ENCODE measurements at regions of chr1 and their contacts with region 1.

Region 1: GRCh38 chr1:205658943-205659581 is 21.2 kb downstream of the SLC45A3 start:
- DNase-seq: peak; percentile 48 to 78 (median 59)
- H3K4me3 ChIP-seq: no peak overlapping the region
- H3K4me3 Mint-ChIP-seq: peak overlapping the region in 1 of 7 donors; percentile 8
- H3K27ac ChIP-seq: no peak overlapping the region
- H3K27ac Mint-ChIP-seq: no peak overlapping the region
- H3K4me1 ChIP-seq: no peaks in the 10 kb centered on the region
- H3K4me1 Mint-ChIP-seq: no peaks in the 10 kb centered on the region
- H3K27me3 ChIP-seq: no peaks in the 10 kb centered on the region
- H3K27me3 Mint-ChIP-seq: peaks cover 17 to 27% of the 10 kb centered on the region in 2 donors

Region 2: DNA sequence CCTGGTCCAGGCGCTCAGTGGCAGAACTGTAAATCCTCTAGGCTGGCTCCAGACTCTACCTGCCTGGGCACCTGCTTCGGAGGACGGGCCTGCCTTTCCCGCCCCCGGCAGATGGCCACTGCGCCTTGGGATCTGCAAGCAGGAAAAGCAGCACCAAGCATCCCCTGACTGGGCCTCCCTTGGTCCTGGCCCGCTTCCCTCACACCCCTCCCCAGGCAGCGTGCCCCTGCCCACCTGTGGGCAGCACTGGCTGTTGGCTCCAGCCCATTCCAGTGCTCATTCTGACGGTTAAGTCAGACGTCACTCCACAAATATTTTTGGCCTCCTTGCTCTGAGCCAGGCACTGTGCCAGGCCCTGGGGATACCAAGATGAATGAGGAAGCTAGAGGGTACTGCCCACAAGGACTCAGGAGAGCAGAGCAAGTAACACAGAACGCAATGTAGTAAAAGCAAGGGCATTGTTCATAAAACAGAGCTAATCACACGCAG is 181.3 kb before region 1 on chr1:
- CTCF ChIA-PET with region 1: no interaction called
- POLR2A ChIA-PET with region 1: no interaction called
- DNase-seq: no peak
- H3K4me3 ChIP-seq: no peak overlapping the region
- H3K4me3 Mint-ChIP-seq: peak overlapping the region in 2 of 7 donors; percentile 12 to 65
- H3K27ac ChIP-seq: no peak overlapping the region
- H3K27ac Mint-ChIP-seq: peak overlapping the region in 4 of 8 donors; percentile 12 to 75 (median 40)
- H3K4me1 ChIP-seq: peaks cover 30% of the 10 kb centered on the region
- H3K4me1 Mint-ChIP-seq: peaks cover 39 to 60% (median 46%) of the 10 kb centered on the region in 3 donors
- H3K27me3 ChIP-seq: peaks cover 8% of the 10 kb centered on the region
- H3K27me3 Mint-ChIP-seq: peaks cover 1 to 15% of the 10 kb centered on the region in 2 donors

Region 3: GRCh38 chr1:205528887-205529825 is 129.9 kb before region 1 on chr1:
- CTCF ChIA-PET with region 1: interaction called, 66 read pairs
- POLR2A ChIA-PET with region 1: no interaction called
- DNase-seq: peak; percentile 64 to 82 (median 75)
- H3K4me3 ChIP-seq: no peak overlapping the region
- H3K4me3 Mint-ChIP-seq: peak overlapping the region in 6 of 7 donors; percentile 34 to 78 (median 44)
- H3K27ac ChIP-seq: no peak overlapping the region
- H3K27ac Mint-ChIP-seq: peak overlapping the region in 1 of 8 donors; percentile 19
- H3K4me1 ChIP-seq: no peaks in the 10 kb centered on the region
- H3K4me1 Mint-ChIP-seq: peaks cover 0 to 7% (median 4%) of the 10 kb centered on the region in 3 donors
- H3K27me3 ChIP-seq: no peaks in the 10 kb centered on the region
- H3K27me3 Mint-ChIP-seq: peaks cover 4 to 8% of the 10 kb centered on the region in 2 donors

Region 4: DNA sequence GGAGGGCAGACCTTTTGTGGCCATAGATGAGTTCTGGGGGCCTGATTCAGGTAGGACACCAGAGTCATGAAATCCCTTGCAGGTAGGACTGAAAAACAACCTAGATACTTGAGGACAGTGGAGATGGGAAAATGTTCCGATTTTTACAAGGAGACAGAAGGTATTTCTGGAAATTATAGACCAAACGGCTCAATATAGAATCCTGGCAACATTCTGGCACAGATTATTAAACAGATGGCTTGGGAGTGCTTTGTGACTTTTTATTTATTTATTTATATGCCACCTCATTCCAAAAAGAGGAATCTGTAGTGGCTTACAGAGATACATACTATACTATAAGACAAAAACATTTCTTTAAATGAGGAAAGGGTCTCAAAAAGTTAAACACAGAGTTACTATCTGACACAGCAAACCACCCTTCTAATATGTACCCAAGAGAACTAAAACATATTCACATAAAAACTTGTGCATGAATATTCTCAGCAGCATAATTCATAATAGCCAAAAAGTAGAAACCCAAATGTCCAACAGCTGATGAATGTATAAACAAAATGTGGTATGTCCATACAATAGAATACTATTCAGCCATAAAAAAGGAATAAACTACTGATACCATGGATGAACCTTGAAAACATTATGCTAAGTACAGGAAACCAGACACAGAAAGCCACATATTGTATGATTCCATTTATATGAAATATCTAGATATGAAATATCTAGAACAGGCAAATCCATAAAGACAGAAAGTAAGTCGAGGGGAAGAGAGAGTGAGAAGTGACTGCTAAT is 104.8 kb before region 1 on chr1:
- CTCF ChIA-PET with region 1: no interaction called
- POLR2A ChIA-PET with region 1: no interaction called
- DNase-seq: no peak
- H3K4me3 ChIP-seq: no peak overlapping the region
- H3K4me3 Mint-ChIP-seq: no peak overlapping the region
- H3K27ac ChIP-seq: no peak overlapping the region
- H3K27ac Mint-ChIP-seq: no peak overlapping the region
- H3K4me1 ChIP-seq: no peaks in the 10 kb centered on the region
- H3K4me1 Mint-ChIP-seq: no peaks in the 10 kb centered on the region
- H3K27me3 ChIP-seq: peaks cover 12% of the 10 kb centered on the region
- H3K27me3 Mint-ChIP-seq: peaks cover 43 to 74% of the 10 kb centered on the region in 2 donors

Region 5: GRCh38 chr1:205600085-205600484 is 59.0 kb before region 1 on chr1:
- CTCF ChIA-PET with region 1: interaction called, 349 read pairs
- POLR2A ChIA-PET with region 1: no interaction called
- DNase-seq: no peak
- H3K4me3 ChIP-seq: no peak overlapping the region
- H3K4me3 Mint-ChIP-seq: no peak overlapping the region
- H3K27ac ChIP-seq: no peak overlapping the region
- H3K27ac Mint-ChIP-seq: peak overlapping the region in 1 of 8 donors; percentile 16
- H3K4me1 ChIP-seq: no peaks in the 10 kb centered on the region
- H3K4me1 Mint-ChIP-seq: peaks cover 7 to 10% (median 8%) of the 10 kb centered on the region in 3 donors
- H3K27me3 ChIP-seq: no peaks in the 10 kb centered on the region
- H3K27me3 Mint-ChIP-seq: no peaks in the 10 kb centered on the region

Region 6: DNA sequence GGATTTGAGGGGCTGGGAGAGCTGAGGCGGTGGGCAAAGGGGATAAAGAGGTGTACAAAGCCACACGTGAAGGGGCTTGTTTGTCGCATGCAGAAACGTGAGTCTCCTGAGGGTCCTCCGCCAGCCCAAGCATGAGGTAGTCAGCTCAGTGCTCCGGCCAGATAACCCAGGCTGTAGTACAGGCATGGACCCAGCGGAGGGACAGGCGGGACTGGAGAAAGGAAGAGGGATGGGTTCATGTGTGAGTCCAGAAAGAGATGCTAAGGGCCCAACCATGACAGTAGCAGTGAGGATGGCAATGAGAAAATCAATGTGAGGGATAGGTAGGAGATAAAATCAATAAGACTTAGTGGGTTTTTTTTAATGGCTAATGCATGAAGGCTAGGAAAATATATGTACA is 13.5 kb before region 1 on chr1:
- CTCF ChIA-PET with region 1: interaction called, 12 read pairs
- POLR2A ChIA-PET with region 1: no interaction called
- DNase-seq: no peak
- H3K4me3 ChIP-seq: no peak overlapping the region
- H3K4me3 Mint-ChIP-seq: no peak overlapping the region
- H3K27ac ChIP-seq: no peak overlapping the region
- H3K27ac Mint-ChIP-seq: no peak overlapping the region
- H3K4me1 ChIP-seq: no peaks in the 10 kb centered on the region
- H3K4me1 Mint-ChIP-seq: no peaks in the 10 kb centered on the region
- H3K27me3 ChIP-seq: no peaks in the 10 kb centered on the region
- H3K27me3 Mint-ChIP-seq: peaks cover 9 to 21% of the 10 kb centered on the region in 2 donors

Region 7: GRCh38 chr1:205711104-205712020 is 52.3 kb after region 1 on chr1:
- CTCF ChIA-PET with region 1: interaction called, 58 read pairs
- POLR2A ChIA-PET with region 1: no interaction called
- DNase-seq: peak; percentile 40 to 68 (median 47)
- H3K4me3 ChIP-seq: no peak overlapping the region
- H3K4me3 Mint-ChIP-seq: no peak overlapping the region
- H3K27ac ChIP-seq: no peak overlapping the region
- H3K27ac Mint-ChIP-seq: peak overlapping the region; percentile 27 to 76 (median 44)
- H3K4me1 ChIP-seq: peaks cover 4% of the 10 kb centered on the region
- H3K4me1 Mint-ChIP-seq: peaks cover 9 to 20% (median 11%) of the 10 kb centered on the region in 3 donors
- H3K27me3 ChIP-seq: no peaks in the 10 kb centered on the region
- H3K27me3 Mint-ChIP-seq: peaks cover 0 to 2% of the 10 kb centered on the region in 2 donors

Region 8: GRCh38 chr1:205782627-205783412 is 123.8 kb after region 1 on chr1:
- CTCF ChIA-PET with region 1: interaction called, 13 read pairs
- POLR2A ChIA-PET with region 1: no interaction called
- DNase-seq: peak in 1 of 5 donors; percentile 29
- H3K4me3 ChIP-seq: no peak overlapping the region
- H3K4me3 Mint-ChIP-seq: no peak overlapping the region
- H3K27ac ChIP-seq: no peak overlapping the region
- H3K27ac Mint-ChIP-seq: peak overlapping the region in 4 of 8 donors; percentile 3 to 52 (median 10)
- H3K4me1 ChIP-seq: peaks cover 9% of the 10 kb centered on the region
- H3K4me1 Mint-ChIP-seq: peaks cover 12 to 14% (median 13%) of the 10 kb centered on the region in 3 donors
- H3K27me3 ChIP-seq: no peaks in the 10 kb centered on the region
- H3K27me3 Mint-ChIP-seq: no peaks in the 10 kb centered on the region

Region 9: DNA sequence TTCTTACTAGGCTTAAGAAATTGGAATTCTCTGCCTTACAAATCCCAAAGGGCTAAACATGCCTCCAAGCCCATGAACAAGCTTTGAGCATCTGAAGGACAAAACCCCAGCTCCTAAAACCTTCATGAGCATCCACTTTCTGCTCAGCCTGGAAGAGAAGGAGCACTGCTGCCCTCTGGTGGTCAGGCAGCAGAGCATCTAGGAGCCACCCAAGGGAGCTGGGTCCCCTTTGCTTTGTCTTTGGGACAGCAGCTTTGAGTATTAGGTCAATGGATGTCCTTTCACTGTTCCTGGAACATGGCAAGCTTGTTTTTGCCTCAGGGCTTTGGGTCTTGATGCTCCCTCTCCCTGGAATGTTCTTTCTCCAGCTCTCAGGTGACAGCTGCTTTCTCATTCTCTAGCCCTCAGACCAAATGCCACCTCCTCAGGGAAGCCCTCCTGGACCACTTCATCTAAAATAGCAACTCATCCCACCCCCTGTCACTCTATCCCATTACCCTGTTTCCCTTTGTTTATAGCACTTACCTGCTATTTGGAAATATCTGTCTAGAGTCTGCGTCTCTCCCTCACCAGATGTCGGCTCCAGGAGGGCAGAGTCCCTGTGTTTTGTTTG is 318.4 kb after region 1 on chr1:
- CTCF ChIA-PET with region 1: interaction called, 58 read pairs
- POLR2A ChIA-PET with region 1: no interaction called
- DNase-seq: peak; percentile 60 to 79 (median 63)
- H3K4me3 ChIP-seq: no peak overlapping the region
- H3K4me3 Mint-ChIP-seq: no peak overlapping the region
- H3K27ac ChIP-seq: no peak overlapping the region
- H3K27ac Mint-ChIP-seq: no peak overlapping the region
- H3K4me1 ChIP-seq: no peaks in the 10 kb centered on the region
- H3K4me1 Mint-ChIP-seq: no peaks in the 10 kb centered on the region
- H3K27me3 ChIP-seq: no peaks in the 10 kb centered on the region
- H3K27me3 Mint-ChIP-seq: peaks cover 1 to 3% of the 10 kb centered on the region in 2 donors